ENCODE measurements at regions of chr12 and their contacts with region 1.

Region 1: GRCh38 chr12:110555577-110556406 is 27.3 kb downstream of the PPTC7 start:
- DNase-seq: no peak
- H3K4me3 ChIP-seq: no peak overlapping the region
- H3K4me3 Mint-ChIP-seq: peak overlapping the region in 1 of 8 donors; percentile 3
- H3K27ac ChIP-seq: no peak overlapping the region
- H3K27ac Mint-ChIP-seq: peak overlapping the region in 4 of 7 donors; percentile 17 to 71 (median 25)
- H3K4me1 ChIP-seq: peaks cover 44% of the 10 kb centered on the region
- H3K4me1 Mint-ChIP-seq: peaks cover 35 to 62% (median 51%) of the 10 kb centered on the region in 4 donors
- H3K27me3 ChIP-seq: no peaks in the 10 kb centered on the region
- H3K27me3 Mint-ChIP-seq: no peaks in the 10 kb centered on the region

Region 2: DNA sequence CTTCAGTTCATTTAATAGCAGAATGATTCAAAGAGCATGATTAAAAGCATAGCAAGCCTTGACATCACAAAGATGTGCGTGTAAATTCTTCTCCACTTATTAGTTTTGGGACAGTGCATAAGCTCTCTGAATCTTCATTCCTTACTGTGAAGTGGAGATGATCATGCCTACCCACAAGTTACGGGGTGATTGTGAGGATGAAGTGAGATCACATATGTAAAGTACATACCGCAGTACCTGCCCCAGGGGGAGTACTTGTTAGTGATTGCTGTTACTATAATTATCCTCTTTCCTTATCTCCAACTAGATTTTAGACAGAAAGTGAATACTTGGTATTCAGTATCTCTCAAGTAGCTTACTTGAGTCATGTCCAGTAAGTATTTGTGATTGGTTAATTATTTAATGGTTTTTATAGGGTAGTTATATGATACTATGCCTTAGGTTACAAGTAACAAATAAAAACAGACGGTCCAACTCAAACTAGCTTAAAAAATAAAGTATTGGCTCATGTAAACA is 47.7 kb before region 1 on chr12:
- CTCF ChIA-PET with region 1: interaction called, 5 read pairs
- POLR2A ChIA-PET with region 1: no interaction called
- intact Hi-C with region 1: loop called (anchors 1 kb)
- DNase-seq: no peak
- H3K4me3 ChIP-seq: no peak overlapping the region
- H3K4me3 Mint-ChIP-seq: no peak overlapping the region
- H3K27ac ChIP-seq: no peak overlapping the region
- H3K27ac Mint-ChIP-seq: no peak overlapping the region
- H3K4me1 ChIP-seq: no peaks in the 10 kb centered on the region
- H3K4me1 Mint-ChIP-seq: no peaks in the 10 kb centered on the region
- H3K27me3 ChIP-seq: no peaks in the 10 kb centered on the region
- H3K27me3 Mint-ChIP-seq: no peaks in the 10 kb centered on the region

Region 3: DNA sequence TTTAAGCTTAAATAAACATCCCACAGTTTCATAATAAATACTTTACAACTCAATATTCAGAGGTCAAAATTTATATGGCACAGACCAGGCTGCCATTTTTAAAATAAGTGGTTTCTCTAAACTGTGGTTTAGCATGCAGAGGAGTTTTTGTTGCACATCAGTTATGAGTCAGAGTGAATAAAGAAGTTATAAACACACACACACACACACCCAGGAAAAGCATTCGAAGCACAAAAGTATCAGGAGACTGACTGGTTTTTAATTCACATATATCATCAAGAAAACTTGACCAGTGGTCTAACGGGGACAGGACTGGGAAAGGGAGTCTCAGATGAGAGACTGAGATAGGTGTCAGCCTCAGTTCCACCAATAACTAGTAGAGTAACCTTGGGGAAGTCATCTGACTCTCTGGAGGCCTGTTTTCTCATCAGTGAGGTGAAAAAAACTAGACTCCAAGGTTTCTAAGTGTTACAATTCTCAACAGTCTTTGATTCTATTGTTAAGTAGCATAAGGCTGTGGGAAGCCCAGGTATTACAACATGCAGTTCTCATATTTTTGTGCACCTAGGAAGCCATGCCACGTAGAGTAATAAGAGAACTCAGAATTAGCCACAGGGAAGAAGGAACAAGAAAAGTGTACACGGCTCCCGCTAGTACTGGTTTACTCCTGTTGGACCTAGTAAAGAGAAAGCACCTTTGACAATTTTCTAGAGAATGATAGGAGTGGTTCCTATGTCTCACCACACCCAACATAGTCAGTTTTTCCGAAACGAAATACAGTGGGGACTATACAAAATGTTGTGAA is 22.1 kb after region 1 on chr12:
- CTCF ChIA-PET with region 1: interaction called, 18 read pairs
- POLR2A ChIA-PET with region 1: interaction called, 12 read pairs
- intact Hi-C with region 1: loop called (anchors 2 kb)
- DNase-seq: peak in 4 of 5 donors; percentile 36 to 86 (median 38)
- H3K4me3 ChIP-seq: peak overlapping the region; percentile 2 to 25
- H3K4me3 Mint-ChIP-seq: peak overlapping the region; percentile 58 to 97 (median 78)
- H3K27ac ChIP-seq: peak overlapping the region; percentile 66
- H3K27ac Mint-ChIP-seq: peak overlapping the region; percentile 69 to 96 (median 92)
- H3K4me1 ChIP-seq: peaks cover 80% of the 10 kb centered on the region
- H3K4me1 Mint-ChIP-seq: peaks cover 50 to 82% (median 68%) of the 10 kb centered on the region in 4 donors
- H3K27me3 ChIP-seq: no peaks in the 10 kb centered on the region
- H3K27me3 Mint-ChIP-seq: no peaks in the 10 kb centered on the region

Region 4: GRCh38 chr12:110590806-110591326 is 35.1 kb after region 1 on chr12:
- CTCF ChIA-PET with region 1: interaction called, 45 read pairs
- POLR2A ChIA-PET with region 1: interaction called, 8 read pairs
- intact Hi-C with region 1: no loop called
- DNase-seq: peak in 4 of 5 donors; percentile 64 to 81 (median 74)
- H3K4me3 ChIP-seq: peak overlapping the region in 1 of 2 donors; percentile 16
- H3K4me3 Mint-ChIP-seq: peak overlapping the region in 7 of 8 donors; percentile 7 to 74 (median 66)
- H3K27ac ChIP-seq: peak overlapping the region; percentile 60
- H3K27ac Mint-ChIP-seq: peak overlapping the region; percentile 95 to 98 (median 97)
- H3K4me1 ChIP-seq: peaks cover 22% of the 10 kb centered on the region
- H3K4me1 Mint-ChIP-seq: peaks cover 17 to 32% (median 27%) of the 10 kb centered on the region in 4 donors
- H3K27me3 ChIP-seq: no peaks in the 10 kb centered on the region
- H3K27me3 Mint-ChIP-seq: no peaks in the 10 kb centered on the region

Region 5: DNA sequence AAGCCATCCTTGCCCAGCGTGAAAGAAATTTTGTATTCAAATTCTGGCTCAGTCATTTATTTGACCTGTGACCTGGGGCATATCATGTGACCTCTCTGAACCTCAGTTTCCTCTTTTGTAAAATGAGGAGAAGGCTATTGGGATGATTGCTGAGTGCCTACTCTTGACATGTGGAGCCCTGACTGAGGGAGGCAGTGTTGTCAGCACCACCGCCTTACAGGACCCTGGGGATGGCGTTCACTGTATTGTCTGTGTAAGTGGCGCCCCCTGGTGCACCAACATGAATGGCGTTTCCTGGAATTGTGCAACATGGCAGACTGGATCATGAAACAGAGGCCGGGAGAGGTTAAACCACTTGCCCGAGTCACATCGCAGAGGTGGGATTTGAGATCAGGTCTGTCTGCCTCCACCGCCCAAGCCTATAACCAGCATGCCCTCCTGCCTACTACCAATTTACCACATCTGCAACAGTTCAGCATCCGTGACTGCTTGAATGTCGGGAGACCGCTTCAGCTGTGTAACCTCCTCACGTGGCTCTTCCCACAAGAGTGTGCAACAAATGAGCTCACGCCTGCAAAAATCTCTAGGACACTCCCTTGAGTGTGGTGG is 270.9 kb after region 1 on chr12:
- CTCF ChIA-PET with region 1: interaction called, 4 read pairs
- POLR2A ChIA-PET with region 1: no interaction called
- intact Hi-C with region 1: loop called (anchors 1 kb)
- DNase-seq: peak; percentile 73 to 83 (median 77)
- H3K4me3 ChIP-seq: peak overlapping the region in 1 of 2 donors; percentile 5
- H3K4me3 Mint-ChIP-seq: peak overlapping the region; percentile 36 to 76 (median 66)
- H3K27ac ChIP-seq: no peak overlapping the region
- H3K27ac Mint-ChIP-seq: peak overlapping the region in 3 of 7 donors; percentile 9 to 89 (median 60)
- H3K4me1 ChIP-seq: peaks cover 6% of the 10 kb centered on the region
- H3K4me1 Mint-ChIP-seq: peaks cover 3 to 7% (median 7%) of the 10 kb centered on the region in 4 donors
- H3K27me3 ChIP-seq: no peaks in the 10 kb centered on the region
- H3K27me3 Mint-ChIP-seq: peaks cover 1 to 4% of the 10 kb centered on the region in 2 donors

Measured in CD4-positive, alpha-beta memory T cell (primary cell).